ENCODE measurements at regions of chr11 and their contacts with region 1.

Region 1: DNA sequence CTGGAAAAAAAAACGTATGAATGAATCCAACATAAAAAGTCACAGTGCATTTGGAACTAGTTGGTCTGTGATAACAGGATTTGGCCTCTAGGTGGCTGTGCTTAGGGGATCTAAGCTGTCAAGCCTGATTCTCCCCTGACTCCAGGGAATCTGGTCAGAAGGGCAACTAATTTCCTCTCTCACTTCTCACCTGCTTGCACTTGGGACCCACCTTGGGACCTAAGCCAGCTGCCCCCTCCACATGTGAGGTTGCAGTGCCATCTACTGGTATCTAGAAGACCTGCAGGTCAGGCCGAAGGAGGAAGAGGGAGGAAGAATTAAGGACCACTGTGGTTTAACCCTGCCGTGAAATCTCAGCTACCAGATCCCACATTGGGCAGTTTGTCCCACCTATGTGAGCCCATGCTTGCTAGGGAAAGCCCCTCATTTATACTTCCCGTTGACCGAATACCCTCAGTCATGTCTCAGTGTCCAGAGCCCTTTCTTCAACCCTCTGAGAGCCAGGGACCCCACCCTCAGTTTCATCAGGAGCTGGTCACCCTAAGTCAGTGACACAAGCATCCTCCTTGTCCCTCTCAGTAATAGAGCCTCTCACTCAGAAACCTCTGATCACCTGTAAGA is 33.2 kb upstream of the CAVIN3 start:
- DNase-seq: peak; percentile 71
- H3K4me3 Mint-ChIP-seq: no peak overlapping the region
- H3K27ac Mint-ChIP-seq: no peak overlapping the region
- H3K4me1 Mint-ChIP-seq: peaks cover 11% of the 10 kb centered on the region
- H3K27me3 Mint-ChIP-seq: no peaks in the 10 kb centered on the region
- CTCF ChIP-seq: peak; percentile 96

Region 2: GRCh38 chr11:6012035-6012668 is 341.3 kb before region 1 on chr11:
- CTCF ChIA-PET with region 1: interaction called, 16 read pairs
- POLR2A ChIA-PET with region 1: interaction called, 3 read pairs
- intact Hi-C with region 1: no loop called
- DNase-seq: peak; percentile 5
- H3K4me3 Mint-ChIP-seq: no peak overlapping the region
- H3K27ac Mint-ChIP-seq: no peak overlapping the region
- H3K4me1 Mint-ChIP-seq: no peaks in the 10 kb centered on the region
- H3K27me3 Mint-ChIP-seq: peaks cover 30% of the 10 kb centered on the region
- CTCF ChIP-seq: no peak

Region 3: DNA sequence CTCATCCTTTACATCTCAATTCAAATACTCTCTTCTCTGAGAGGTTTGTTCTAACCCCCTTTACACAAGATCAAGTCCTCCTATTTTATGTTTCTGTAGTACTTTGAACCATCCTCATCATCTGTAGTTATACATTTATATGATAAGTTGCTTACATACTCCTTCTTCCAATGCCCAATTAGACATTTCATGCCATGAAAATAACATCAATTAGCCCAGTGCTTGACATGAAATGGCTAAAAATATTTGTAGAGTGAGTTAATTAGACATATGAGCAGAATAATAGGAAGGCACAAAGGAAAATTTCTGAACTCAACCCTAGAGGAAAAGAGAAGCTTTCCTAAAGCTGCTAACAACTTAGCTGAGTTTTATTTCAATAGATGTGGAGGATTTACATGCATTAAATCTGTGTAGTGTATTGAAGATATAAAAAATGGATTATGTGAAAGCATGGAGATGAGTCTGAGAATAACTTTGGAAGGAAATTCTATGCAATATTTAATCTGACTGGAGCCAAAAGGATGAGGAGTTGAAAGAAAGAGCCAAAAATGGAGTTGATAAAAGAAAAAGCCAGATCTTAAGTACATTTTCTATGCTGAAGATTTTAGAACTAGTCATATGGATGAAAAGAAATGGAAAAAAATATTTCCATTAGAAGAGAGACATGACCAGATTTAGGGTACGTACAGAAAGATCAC is 322.6 kb before region 1 on chr11 and contains the start of gene OR56A1:
- CTCF ChIA-PET with region 1: interaction called, 21 read pairs
- POLR2A ChIA-PET with region 1: no interaction called
- intact Hi-C with region 1: no loop called
- DNase-seq: no peak
- H3K4me3 Mint-ChIP-seq: no peak within 1 kb of the TSS
- H3K27ac Mint-ChIP-seq: no peak within 1 kb of the TSS
- H3K4me1 Mint-ChIP-seq: no peaks in the 10 kb centered on the region
- H3K27me3 Mint-ChIP-seq: peaks cover 21% of the 10 kb centered on the region
- CTCF ChIP-seq: no peak
- total RNA-seq, gene OR56A1: not detected in 2 replicates

Region 4: GRCh38 chr11:6251120-6251733 is 102.2 kb before region 1 on chr11:
- CTCF ChIA-PET with region 1: interaction called, 94 read pairs
- POLR2A ChIA-PET with region 1: no interaction called
- intact Hi-C with region 1: loop called (anchors 1 kb)
- DNase-seq: peak; percentile 74
- H3K4me3 Mint-ChIP-seq: no peak overlapping the region
- H3K27ac Mint-ChIP-seq: no peak overlapping the region
- H3K4me1 Mint-ChIP-seq: peaks cover 16% of the 10 kb centered on the region
- H3K27me3 Mint-ChIP-seq: no peaks in the 10 kb centered on the region
- CTCF ChIP-seq: peak; percentile 87

Region 5: DNA sequence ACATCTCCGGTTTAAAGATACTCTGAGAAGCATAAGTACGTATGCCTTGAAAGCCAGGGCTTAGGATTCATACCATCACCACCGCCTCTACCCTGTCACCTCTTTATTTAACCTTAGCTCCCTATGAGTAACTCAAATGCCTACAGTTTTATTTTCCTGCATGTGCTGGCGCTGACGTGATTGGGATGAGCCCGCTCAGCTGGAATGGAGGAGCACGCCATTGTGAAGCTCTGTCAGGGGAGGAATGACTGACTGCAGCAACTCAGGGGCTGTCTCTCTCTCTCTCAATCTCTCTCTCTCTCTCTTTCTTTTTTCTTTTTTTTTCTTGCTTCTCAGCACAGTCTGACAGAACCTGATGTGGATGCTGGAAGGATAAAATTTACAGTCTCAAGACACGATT is 45.6 kb before region 1 on chr11:
- CTCF ChIA-PET with region 1: interaction called, 176 read pairs
- POLR2A ChIA-PET with region 1: no interaction called
- intact Hi-C with region 1: no loop called
- DNase-seq: no peak
- H3K4me3 Mint-ChIP-seq: no peak overlapping the region
- H3K27ac Mint-ChIP-seq: no peak overlapping the region
- H3K4me1 Mint-ChIP-seq: no peaks in the 10 kb centered on the region
- H3K27me3 Mint-ChIP-seq: peaks cover 23% of the 10 kb centered on the region
- CTCF ChIP-seq: no peak

Region 6: DNA sequence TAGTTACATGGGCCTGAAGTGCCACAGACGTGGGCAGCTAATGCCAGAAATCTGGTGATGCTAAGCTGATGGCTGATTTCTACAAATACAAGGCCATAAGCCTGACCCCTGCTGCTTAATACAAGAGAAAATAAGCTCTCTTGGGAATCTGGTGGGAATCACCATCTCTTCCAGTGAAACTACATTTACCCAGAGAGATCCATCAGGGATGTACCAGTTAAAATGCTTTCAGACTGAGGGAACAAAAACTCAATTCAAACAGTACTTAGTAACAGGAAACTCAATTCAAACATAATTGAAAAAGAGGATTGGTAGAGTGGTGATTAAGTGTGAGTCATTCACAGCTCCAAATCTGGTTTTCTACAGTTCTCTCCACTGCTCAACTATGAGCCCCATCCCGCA is 31.5 kb before region 1 on chr11:
- CTCF ChIA-PET with region 1: interaction called, 176 read pairs
- POLR2A ChIA-PET with region 1: interaction called, 7 read pairs
- intact Hi-C with region 1: loop called (anchors 1 kb)
- DNase-seq: peak; percentile 64
- H3K4me3 Mint-ChIP-seq: peak overlapping the region; percentile 86
- H3K27ac Mint-ChIP-seq: peak overlapping the region; percentile 97
- H3K4me1 Mint-ChIP-seq: peaks cover 36% of the 10 kb centered on the region
- H3K27me3 Mint-ChIP-seq: no peaks in the 10 kb centered on the region
- CTCF ChIP-seq: no peak

Region 7: DNA sequence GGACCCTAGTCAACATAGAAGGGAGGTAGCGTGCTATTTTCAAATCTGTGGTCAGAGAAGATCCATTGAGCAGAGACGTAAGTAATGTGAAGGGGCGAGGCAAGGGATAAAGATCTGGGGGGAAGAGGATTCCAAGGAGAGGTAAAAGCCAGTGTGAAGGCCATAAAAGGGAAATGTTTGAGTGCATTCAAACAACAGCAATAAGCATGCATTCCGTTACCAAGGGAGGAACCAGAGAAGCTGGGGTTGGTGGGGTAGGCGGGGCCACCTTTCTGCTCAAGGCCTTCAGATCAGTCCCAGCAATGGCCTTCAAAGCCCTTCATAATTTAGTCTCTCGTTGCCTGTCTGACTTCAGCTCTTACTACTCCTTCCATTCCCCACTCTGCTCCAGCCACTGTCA is 18.3 kb after region 1 on chr11:
- CTCF ChIA-PET with region 1: interaction called, 24 read pairs
- POLR2A ChIA-PET with region 1: no interaction called
- intact Hi-C with region 1: no loop called
- DNase-seq: no peak
- H3K4me3 Mint-ChIP-seq: no peak overlapping the region
- H3K27ac Mint-ChIP-seq: no peak overlapping the region
- H3K4me1 Mint-ChIP-seq: no peaks in the 10 kb centered on the region
- H3K27me3 Mint-ChIP-seq: peaks cover 11% of the 10 kb centered on the region
- CTCF ChIP-seq: no peak

Measured in MCF 10A (cell line).